ENCODE measurements at regions of chr17 and their contacts with region 1.

Region 1: GRCh38 chr17:56819431-56820145 is 14.1 kb downstream of the C17orf67 start:
- DNase-seq: peak; percentile 79
- H3K4me3 ChIP-seq: no peak overlapping the region
- H3K27ac ChIP-seq: no peak overlapping the region
- H3K4me1 ChIP-seq: peaks cover 24% of the 10 kb centered on the region
- H3K27me3 ChIP-seq: no peaks in the 10 kb centered on the region
- CTCF ChIP-seq: peak; percentile 67 to 80
- POLR2A ChIP-seq: no peak

Region 2: GRCh38 chr17:56737366-56738161 is 82.0 kb before region 1 on chr17:
- CTCF ChIA-PET with region 1: no interaction called
- POLR2A ChIA-PET with region 1: no interaction called
- dilution Hi-C with region 1: no loop called
- intact Hi-C with region 1: no loop called
- DNase-seq: no peak
- H3K4me3 ChIP-seq: no peak overlapping the region
- H3K27ac ChIP-seq: no peak overlapping the region
- H3K4me1 ChIP-seq: no peaks in the 10 kb centered on the region
- H3K27me3 ChIP-seq: peaks cover 5% of the 10 kb centered on the region in 2 experiments
- CTCF ChIP-seq: no peak
- POLR2A ChIP-seq: no peak

Region 3: DNA sequence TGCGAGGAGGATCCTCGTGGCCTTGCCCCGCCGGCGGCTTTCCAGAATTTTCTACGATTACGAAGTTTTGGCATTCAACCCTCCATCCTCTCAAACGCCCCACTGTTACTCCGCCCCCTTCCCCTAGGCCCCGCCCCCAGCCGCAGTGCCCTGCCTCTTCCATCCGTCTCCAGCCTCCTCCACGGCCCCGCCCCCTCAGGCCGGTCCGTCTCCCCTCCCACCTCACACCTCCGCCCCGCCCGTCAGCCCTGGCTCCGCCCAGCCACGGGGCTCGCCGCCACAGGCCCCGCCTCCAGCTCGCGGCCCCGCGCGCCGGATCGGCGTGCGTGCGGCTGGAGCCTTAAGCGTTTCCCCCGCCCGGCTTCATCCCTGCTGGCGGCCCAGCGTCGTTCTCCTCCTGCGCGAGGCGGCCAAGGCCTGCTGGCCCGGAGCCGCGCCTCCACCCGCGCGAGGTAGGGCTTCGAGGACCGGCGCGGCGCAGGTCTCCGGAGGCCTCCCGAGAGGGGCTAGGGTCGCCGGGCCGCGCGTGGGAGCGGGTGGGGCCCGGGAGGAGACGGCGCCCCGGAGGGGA is 14.3 kb after region 1 on chr17 and contains the starts of genes C17orf67 and DGKE:
- CTCF ChIA-PET with region 1: interaction called, 71 read pairs
- POLR2A ChIA-PET with region 1: no interaction called
- dilution Hi-C with region 1: no loop called
- intact Hi-C with region 1: loop called (anchors 1 kb)
- DNase-seq: peak; percentile 97
- H3K4me3 ChIP-seq: peak within 1 kb of the TSS; percentile 76 to 77 (median 77)
- H3K27ac ChIP-seq: peak within 1 kb of the TSS; percentile 83
- H3K4me1 ChIP-seq: peaks cover 45% of the 10 kb centered on the region
- H3K27me3 ChIP-seq: no peaks in the 10 kb centered on the region
- CTCF ChIP-seq: no peak
- POLR2A ChIP-seq: peak; percentile 56
- total RNA-seq, gene C17orf67: 5.6 and 5.8 TPM in 2 replicates
- total RNA-seq, gene DGKE: 20.3 and 22.9 TPM in 2 replicates

Region 4: DNA sequence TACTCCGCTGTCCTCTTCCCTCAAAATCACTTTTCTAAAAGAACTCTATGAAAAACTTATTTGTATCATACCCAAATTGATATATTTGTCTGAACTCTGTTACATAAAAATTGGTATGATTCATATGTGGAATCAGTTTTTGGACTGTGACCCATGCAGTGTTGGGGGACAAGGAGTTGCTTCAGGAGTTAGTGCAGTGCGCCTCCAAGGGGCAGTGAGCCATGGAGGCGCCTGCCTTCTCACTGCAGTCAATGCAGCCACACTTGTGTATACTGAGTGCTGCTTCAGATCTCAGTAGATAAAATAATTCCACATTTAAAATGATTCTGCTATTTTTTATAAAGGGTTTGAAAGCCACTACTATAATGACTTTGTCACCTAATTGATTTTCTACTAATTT is 46.9 kb after region 1 on chr17:
- CTCF ChIA-PET with region 1: interaction called, 27 read pairs
- POLR2A ChIA-PET with region 1: no interaction called
- dilution Hi-C with region 1: no loop called
- intact Hi-C with region 1: loop called (anchors 1 kb)
- DNase-seq: peak; percentile 36
- H3K4me3 ChIP-seq: no peak overlapping the region
- H3K27ac ChIP-seq: no peak overlapping the region
- H3K4me1 ChIP-seq: peaks cover 19% of the 10 kb centered on the region
- H3K27me3 ChIP-seq: no peaks in the 10 kb centered on the region
- CTCF ChIP-seq: peak in 1 of 2 donors; percentile 6
- POLR2A ChIP-seq: no peak

Region 5: GRCh38 chr17:56891784-56892183 is 72.2 kb after region 1 on chr17:
- CTCF ChIA-PET with region 1: interaction called, 20 read pairs
- POLR2A ChIA-PET with region 1: no interaction called
- dilution Hi-C with region 1: no loop called
- intact Hi-C with region 1: no loop called
- DNase-seq: peak; percentile 28
- H3K4me3 ChIP-seq: no peak overlapping the region
- H3K27ac ChIP-seq: no peak overlapping the region
- H3K4me1 ChIP-seq: no peaks in the 10 kb centered on the region
- H3K27me3 ChIP-seq: no peaks in the 10 kb centered on the region
- CTCF ChIP-seq: peak; percentile 55 to 66
- POLR2A ChIP-seq: no peak

Region 6: GRCh38 chr17:56939901-56940343 is 120.3 kb after region 1 on chr17:
- CTCF ChIA-PET with region 1: interaction called, 148 read pairs
- POLR2A ChIA-PET with region 1: no interaction called
- dilution Hi-C with region 1: no loop called
- intact Hi-C with region 1: loop called (anchors 1 kb)
- DNase-seq: peak; percentile 77
- H3K4me3 ChIP-seq: no peak overlapping the region
- H3K27ac ChIP-seq: peak overlapping the region; percentile 35
- H3K4me1 ChIP-seq: peaks cover 24% of the 10 kb centered on the region
- H3K27me3 ChIP-seq: no peaks in the 10 kb centered on the region
- CTCF ChIP-seq: peak; percentile 51 to 53
- POLR2A ChIP-seq: no peak

Region 7: DNA sequence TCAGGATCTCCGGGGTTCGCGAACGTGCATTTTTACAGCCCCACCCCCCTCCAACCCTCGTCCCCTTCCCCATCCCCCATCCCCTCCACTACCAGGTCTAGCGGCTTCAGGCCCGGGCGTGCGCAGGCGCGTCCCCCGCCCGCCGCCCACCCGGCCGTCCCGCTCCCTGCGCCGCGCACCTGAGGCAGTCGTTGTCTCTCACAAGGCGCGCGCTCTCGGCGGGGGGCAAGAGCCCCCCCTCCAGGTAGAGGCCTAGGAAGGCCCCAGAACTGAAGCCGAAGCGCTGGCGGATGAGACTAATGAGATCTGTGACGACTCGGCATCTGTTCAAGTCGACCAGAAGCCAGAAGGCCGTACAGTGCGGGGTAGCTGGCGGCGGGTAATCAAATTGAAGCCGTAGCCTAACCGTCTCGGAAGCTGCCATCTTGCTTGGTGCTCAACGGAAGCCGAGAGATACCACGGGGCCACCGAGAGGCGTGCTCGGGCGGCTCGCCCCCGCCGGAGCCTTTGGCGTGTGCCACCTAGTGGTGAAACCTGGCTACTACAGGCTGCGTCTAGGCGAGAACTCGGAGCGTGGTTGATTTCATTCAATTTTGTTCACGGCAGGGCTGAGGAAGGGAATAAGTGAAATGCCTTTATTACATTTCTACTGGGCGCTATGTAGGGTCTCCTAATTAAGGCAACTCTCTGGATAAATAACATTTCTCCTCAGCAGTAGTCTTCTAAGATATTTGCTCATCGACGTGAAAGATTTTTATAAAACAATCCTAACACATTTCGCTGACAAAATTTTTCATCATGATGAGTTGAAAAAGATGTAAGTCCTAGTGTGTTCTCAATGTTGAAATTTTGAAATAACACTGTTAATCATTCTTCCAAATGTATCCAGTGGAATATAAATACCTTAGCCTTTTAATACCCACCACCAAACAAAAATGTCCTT is 141.3 kb after region 1 on chr17 and contains the start of gene COIL:
- CTCF ChIA-PET with region 1: interaction called, 7 read pairs
- POLR2A ChIA-PET with region 1: no interaction called
- dilution Hi-C with region 1: no loop called
- intact Hi-C with region 1: loop called (anchors 1 kb)
- DNase-seq: peak; percentile 90
- H3K4me3 ChIP-seq: peak within 1 kb of the TSS; percentile 73 to 98 (median 88)
- H3K27ac ChIP-seq: peak within 1 kb of the TSS; percentile 84
- H3K4me1 ChIP-seq: peaks cover 2% of the 10 kb centered on the region
- H3K27me3 ChIP-seq: no peaks in the 10 kb centered on the region
- CTCF ChIP-seq: peak; percentile 99
- POLR2A ChIP-seq: peak; percentile 49
- total RNA-seq, gene COIL: 17.6 and 20.6 TPM in 2 replicates

Region 8: DNA sequence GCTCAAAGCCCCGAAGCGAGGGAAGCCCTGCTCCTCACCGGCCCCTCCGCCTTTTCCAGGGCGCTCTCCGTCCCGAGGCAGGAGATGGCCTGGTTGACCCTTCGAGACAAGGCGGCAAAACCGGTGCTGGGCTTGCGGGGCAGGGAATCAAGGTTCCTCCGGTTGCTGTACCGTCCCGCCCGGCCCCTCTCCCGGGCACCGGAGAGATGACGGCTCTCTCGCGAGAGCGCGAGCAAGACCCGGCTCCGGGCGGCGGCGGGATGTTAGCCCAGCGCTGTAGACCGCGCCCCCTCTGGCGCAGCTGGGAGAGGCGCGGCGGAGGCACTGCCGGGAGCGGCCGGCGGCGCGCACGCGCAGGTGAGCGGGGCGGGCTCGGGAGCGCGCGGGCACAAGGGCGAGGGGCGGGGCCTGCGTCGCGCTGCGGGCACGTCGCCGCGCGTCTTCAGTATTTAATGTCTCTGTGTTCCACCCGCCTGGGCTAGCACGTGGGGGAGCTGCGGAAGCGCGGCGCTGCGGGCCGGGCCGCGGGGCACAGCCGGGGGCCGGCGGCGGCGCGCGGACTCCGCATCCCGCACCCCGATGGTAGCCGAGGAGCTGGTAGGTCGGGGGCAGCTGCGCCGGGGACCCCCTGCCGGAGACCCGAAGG is 265.3 kb after region 1 on chr17 and contains the start of gene AKAP1:
- CTCF ChIA-PET with region 1: interaction called, 3 read pairs
- POLR2A ChIA-PET with region 1: no interaction called
- dilution Hi-C with region 1: no loop called
- intact Hi-C with region 1: loop called (anchors 1 kb)
- DNase-seq: peak; percentile 95
- H3K4me3 ChIP-seq: peak within 1 kb of the TSS; percentile 45 to 99 (median 68)
- H3K27ac ChIP-seq: peak within 1 kb of the TSS; percentile 88
- H3K4me1 ChIP-seq: peaks cover 8% of the 10 kb centered on the region
- H3K27me3 ChIP-seq: peaks cover 0 to 1% of the 10 kb centered on the region in 2 experiments
- CTCF ChIP-seq: peak in 1 of 2 donors; percentile 29
- POLR2A ChIP-seq: peak; percentile 95
- total RNA-seq, gene AKAP1: 20.9 and 23.9 TPM in 2 replicates

Region 9: GRCh38 chr17:57130761-57131461 is 311.3 kb after region 1 on chr17:
- CTCF ChIA-PET with region 1: no interaction called
- POLR2A ChIA-PET with region 1: no interaction called
- dilution Hi-C with region 1: no loop called
- intact Hi-C with region 1: no loop called
- DNase-seq: peak; percentile 57
- H3K4me3 ChIP-seq: no peak overlapping the region
- H3K27ac ChIP-seq: no peak overlapping the region
- H3K4me1 ChIP-seq: no peaks in the 10 kb centered on the region
- H3K27me3 ChIP-seq: no peaks in the 10 kb centered on the region
- CTCF ChIP-seq: peak; percentile 46 to 85
- POLR2A ChIP-seq: no peak

Measured in endothelial cell of umbilical vein (primary cell).